GM12878 (cell line): ENCODE measurements at regions of chr5 and their contacts with region 1.

Region 1: DNA sequence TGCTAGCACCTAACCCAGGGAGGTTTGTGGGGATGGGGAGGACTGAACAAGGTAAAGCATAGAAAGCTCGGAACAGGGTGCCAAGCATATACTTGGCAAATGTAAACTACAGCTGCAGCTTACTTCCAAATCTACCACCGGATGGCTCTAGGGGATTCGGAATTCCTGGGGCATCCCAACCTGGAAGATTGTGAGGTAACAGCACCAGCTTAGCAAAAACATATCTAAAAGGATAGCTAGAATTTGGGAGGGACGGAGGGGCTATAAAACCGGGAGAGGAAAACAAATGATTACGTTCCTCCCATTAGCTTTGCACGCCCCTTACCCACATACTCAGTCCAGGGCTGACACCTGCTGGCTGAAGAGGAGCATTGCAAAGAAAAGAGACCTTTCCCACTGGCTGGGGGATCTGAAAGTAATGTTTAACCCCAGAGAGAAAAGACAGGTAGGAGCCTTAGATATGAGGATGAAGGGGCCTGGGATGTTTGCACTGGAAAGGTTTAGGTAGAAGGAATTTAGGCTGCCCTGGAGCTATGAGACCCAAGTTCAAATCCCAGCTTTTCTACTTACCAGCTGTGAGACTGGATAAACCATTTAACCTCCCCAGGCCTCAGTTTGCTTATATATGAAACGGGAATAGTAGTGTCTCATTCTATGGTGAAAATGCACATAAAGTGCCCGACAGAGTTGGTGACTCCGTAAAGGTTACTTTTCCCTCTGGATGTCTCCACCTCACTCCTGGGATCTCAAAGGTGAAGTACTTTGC is 73.6 kb downstream of the FAM114A2 start:
- DNase-seq: peak; percentile 13
- ATAC-seq: peak; percentile 88
- H3K4me3 ChIP-seq: no peak overlapping the region
- H3K27ac ChIP-seq: no peak overlapping the region
- H3K4me1 ChIP-seq: no peaks in the 10 kb centered on the region
- H3K27me3 ChIP-seq: no peaks in the 10 kb centered on the region; a peak in 1 of 4 replicates
- CTCF ChIP-seq: peak; percentile 82 to 95 (median 89)
- EP300 ChIP-seq: no peak
- POLR2A ChIP-seq: no peak
- RAD21 ChIP-seq: peak; percentile 99

Region 2: GRCh38 chr5:152532714-152533113 is 1432.3 kb before region 1 on chr5:
- CTCF ChIA-PET with region 1: interaction called, 49 read pairs
- POLR2A ChIA-PET with region 1: no interaction called
- RAD21 ChIA-PET with region 1: interaction called, 16 read pairs
- SMC1A ChIA-PET with region 1: interaction called, 9 read pairs
- in situ Hi-C with region 1: loop called (anchors 5 kb)
- intact Hi-C with region 1: loop called (anchors 1 kb)
- DNase-seq: peak; percentile 15
- ATAC-seq: peak; percentile 80
- H3K4me3 ChIP-seq: no peak overlapping the region
- H3K27ac ChIP-seq: no peak overlapping the region
- H3K4me1 ChIP-seq: no peaks in the 10 kb centered on the region
- H3K27me3 ChIP-seq: no peaks in the 10 kb centered on the region
- CTCF ChIP-seq: peak; percentile 32 to 65 (median 43); a peak in 4 of 6 replicates
- EP300 ChIP-seq: no peak
- POLR2A ChIP-seq: no peak
- RAD21 ChIP-seq: peak; percentile 86

Region 3: GRCh38 chr5:153147891-153148623 is 817.0 kb before region 1 on chr5:
- CTCF ChIA-PET with region 1: interaction called, 5 read pairs
- POLR2A ChIA-PET with region 1: no interaction called
- RAD21 ChIA-PET with region 1: interaction called, 5 read pairs
- SMC1A ChIA-PET with region 1: interaction called, 3 read pairs
- in situ Hi-C with region 1: no loop called
- intact Hi-C with region 1: loop called (anchors 10 kb)
- DNase-seq: no peak
- ATAC-seq: peak; percentile 89
- H3K4me3 ChIP-seq: no peak overlapping the region
- H3K27ac ChIP-seq: no peak overlapping the region
- H3K4me1 ChIP-seq: no peaks in the 10 kb centered on the region
- H3K27me3 ChIP-seq: no peaks in the 10 kb centered on the region
- CTCF ChIP-seq: peak; percentile 55 to 61 (median 56); a peak in 5 of 6 replicates
- EP300 ChIP-seq: no peak
- POLR2A ChIP-seq: no peak
- RAD21 ChIP-seq: peak; percentile 60

Region 4: DNA sequence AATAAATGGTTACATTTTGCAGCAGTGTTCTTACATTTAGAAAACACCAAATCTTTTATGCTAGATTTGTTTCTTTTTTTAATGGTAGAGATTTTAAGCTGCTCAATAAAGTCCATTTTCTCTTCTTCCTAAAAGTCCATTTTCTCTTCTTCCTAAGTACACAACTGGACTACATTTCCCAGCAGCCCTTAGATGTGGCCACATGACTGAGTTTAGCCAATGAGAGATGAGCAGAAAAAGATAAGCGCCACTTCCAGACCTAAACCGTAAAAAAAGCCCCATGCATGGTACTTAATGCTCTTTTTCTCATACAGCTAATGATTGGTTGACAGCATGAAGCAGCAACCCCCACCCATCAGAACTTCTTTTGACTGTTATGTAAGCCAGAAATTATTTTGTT is 133.1 kb before region 1 on chr5:
- CTCF ChIA-PET with region 1: interaction called, 8 read pairs
- POLR2A ChIA-PET with region 1: no interaction called
- RAD21 ChIA-PET with region 1: no interaction called
- SMC1A ChIA-PET with region 1: no interaction called
- in situ Hi-C with region 1: no loop called
- intact Hi-C with region 1: loop called (anchors 5 kb)
- DNase-seq: peak; percentile 11
- ATAC-seq: peak; percentile 96
- H3K4me3 ChIP-seq: no peak overlapping the region
- H3K27ac ChIP-seq: no peak overlapping the region
- H3K4me1 ChIP-seq: no peaks in the 10 kb centered on the region
- H3K27me3 ChIP-seq: no peaks in the 10 kb centered on the region
- CTCF ChIP-seq: no peak
- EP300 ChIP-seq: no peak
- POLR2A ChIP-seq: no peak
- RAD21 ChIP-seq: no peak

Region 5: GRCh38 chr5:153987306-153987705 is 22.2 kb after region 1 on chr5:
- CTCF ChIA-PET with region 1: interaction called, 10 read pairs
- POLR2A ChIA-PET with region 1: no interaction called
- RAD21 ChIA-PET with region 1: no interaction called
- SMC1A ChIA-PET with region 1: no interaction called
- in situ Hi-C with region 1: no loop called
- intact Hi-C with region 1: no loop called
- DNase-seq: no peak
- ATAC-seq: no peak
- H3K4me3 ChIP-seq: no peak overlapping the region
- H3K27ac ChIP-seq: no peak overlapping the region
- H3K4me1 ChIP-seq: no peaks in the 10 kb centered on the region
- H3K27me3 ChIP-seq: no peaks in the 10 kb centered on the region
- CTCF ChIP-seq: no peak
- EP300 ChIP-seq: no peak
- POLR2A ChIP-seq: no peak
- RAD21 ChIP-seq: no peak

Region 6: GRCh38 chr5:154049636-154050035 is 84.6 kb after region 1 on chr5:
- CTCF ChIA-PET with region 1: no interaction called
- POLR2A ChIA-PET with region 1: no interaction called
- RAD21 ChIA-PET with region 1: no interaction called
- SMC1A ChIA-PET with region 1: no interaction called
- in situ Hi-C with region 1: no loop called
- intact Hi-C with region 1: no loop called
- DNase-seq: no peak
- ATAC-seq: no peak
- H3K4me3 ChIP-seq: no peak overlapping the region
- H3K27ac ChIP-seq: no peak overlapping the region
- H3K4me1 ChIP-seq: peaks cover 3% of the 10 kb centered on the region; the same call in 1 of the 2 replicates
- H3K27me3 ChIP-seq: no peaks in the 10 kb centered on the region
- CTCF ChIP-seq: no peak
- EP300 ChIP-seq: no peak
- POLR2A ChIP-seq: no peak
- RAD21 ChIP-seq: no peak

Region 7: DNA sequence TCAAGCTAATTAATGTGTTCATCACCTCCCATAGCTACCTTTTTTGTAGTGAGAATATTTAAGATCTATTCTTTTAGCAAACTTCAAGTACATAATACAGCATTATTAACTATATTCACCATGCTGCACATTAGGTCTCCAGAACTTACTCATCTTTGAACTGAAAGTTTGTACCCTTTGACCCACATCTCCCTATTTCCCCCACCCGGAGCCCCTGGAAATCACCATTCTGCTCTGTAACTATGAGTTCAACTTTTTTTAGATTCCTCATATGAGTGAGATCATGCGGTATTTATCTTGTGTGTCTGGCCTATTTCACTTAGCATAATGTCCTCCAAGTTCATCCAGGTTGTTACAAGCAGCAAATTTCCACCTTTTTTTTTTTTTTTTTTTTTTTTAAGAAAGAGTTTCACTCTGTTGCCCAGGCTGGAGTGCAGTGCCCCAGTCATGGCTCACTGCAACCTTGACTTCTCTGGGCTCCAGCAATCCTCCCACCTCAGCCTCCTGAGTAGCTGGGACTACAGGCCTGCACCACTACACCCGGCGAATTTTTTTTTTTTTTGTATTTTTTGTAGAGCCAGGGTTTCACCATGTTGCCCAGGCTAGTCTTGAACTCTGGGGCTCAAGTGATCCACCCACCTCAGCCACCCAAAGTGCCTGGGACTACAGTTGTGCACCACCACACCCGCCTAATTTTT is 380.3 kb after region 1 on chr5:
- CTCF ChIA-PET with region 1: no interaction called
- POLR2A ChIA-PET with region 1: no interaction called
- RAD21 ChIA-PET with region 1: no interaction called
- SMC1A ChIA-PET with region 1: no interaction called
- in situ Hi-C with region 1: no loop called
- intact Hi-C with region 1: no loop called
- DNase-seq: peak; percentile 53
- ATAC-seq: peak; percentile 93
- H3K4me3 ChIP-seq: no peak overlapping the region
- H3K27ac ChIP-seq: no peak overlapping the region; the same call in 1 of the 2 replicates
- H3K4me1 ChIP-seq: peaks cover 12% of the 10 kb centered on the region
- H3K27me3 ChIP-seq: no peaks in the 10 kb centered on the region
- CTCF ChIP-seq: no peak
- EP300 ChIP-seq: 0 out of 4 replicates have a peak, but pooled peaks of 1 of the 2 experiments have one; percentile 12
- POLR2A ChIP-seq: no peak
- RAD21 ChIP-seq: no peak

Region 8: DNA sequence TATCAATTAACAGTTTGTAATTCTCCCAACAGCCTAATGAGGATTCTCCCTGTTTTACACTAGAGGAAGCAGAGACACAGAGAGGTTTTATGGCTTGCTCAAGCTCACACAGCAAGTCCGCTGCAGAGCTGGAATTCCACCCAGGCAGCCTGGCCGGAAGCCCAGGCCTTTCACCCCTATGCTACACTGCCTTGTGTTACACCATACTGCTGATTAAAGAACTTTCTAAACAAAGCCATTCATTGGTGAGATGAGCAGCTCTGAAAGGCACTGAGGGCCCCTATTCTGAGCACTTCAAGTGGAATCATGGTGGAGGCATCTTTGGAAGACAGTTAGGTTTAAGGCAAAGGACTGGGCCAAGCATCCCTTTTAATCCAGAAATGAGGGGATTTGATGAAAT is 775.4 kb after region 1 on chr5:
- CTCF ChIA-PET with region 1: no interaction called
- POLR2A ChIA-PET with region 1: no interaction called
- RAD21 ChIA-PET with region 1: no interaction called
- SMC1A ChIA-PET with region 1: no interaction called
- in situ Hi-C with region 1: no loop called
- intact Hi-C with region 1: no loop called
- DNase-seq: no peak
- ATAC-seq: no peak
- H3K4me3 ChIP-seq: no peak overlapping the region
- H3K27ac ChIP-seq: no peak overlapping the region
- H3K4me1 ChIP-seq: no peaks in the 10 kb centered on the region
- H3K27me3 ChIP-seq: no peaks in the 10 kb centered on the region
- CTCF ChIP-seq: no peak
- EP300 ChIP-seq: no peak
- POLR2A ChIP-seq: no peak
- RAD21 ChIP-seq: no peak